Right ventricle myocardium inferior (tissue), 1 donor: ENCODE measurements at regions of chrX and their contacts with region 1.

Region 1: GRCh38 chrX:137051978-137052642 is 18.3 kb upstream of the GPR101 start:
- DNase-seq: peak; percentile 72
- ATAC-seq: peak; percentile 75

Region 2: GRCh38 chrX:136954930-136955329 is 97.2 kb before region 1 on chrX:
- intact Hi-C with region 1: loop called (anchors 5 kb)
- DNase-seq: no peak
- ATAC-seq: no peak

Region 3: GRCh38 chrX:137587151-137587550 is 535.0 kb after region 1 on chrX:
- intact Hi-C with region 1: no loop called
- DNase-seq: no peak
- ATAC-seq: no peak